Breast epithelium (tissue), 4 donors: ENCODE measurements at regions of chr11 and their contacts with region 1.

Region 1: DNA sequence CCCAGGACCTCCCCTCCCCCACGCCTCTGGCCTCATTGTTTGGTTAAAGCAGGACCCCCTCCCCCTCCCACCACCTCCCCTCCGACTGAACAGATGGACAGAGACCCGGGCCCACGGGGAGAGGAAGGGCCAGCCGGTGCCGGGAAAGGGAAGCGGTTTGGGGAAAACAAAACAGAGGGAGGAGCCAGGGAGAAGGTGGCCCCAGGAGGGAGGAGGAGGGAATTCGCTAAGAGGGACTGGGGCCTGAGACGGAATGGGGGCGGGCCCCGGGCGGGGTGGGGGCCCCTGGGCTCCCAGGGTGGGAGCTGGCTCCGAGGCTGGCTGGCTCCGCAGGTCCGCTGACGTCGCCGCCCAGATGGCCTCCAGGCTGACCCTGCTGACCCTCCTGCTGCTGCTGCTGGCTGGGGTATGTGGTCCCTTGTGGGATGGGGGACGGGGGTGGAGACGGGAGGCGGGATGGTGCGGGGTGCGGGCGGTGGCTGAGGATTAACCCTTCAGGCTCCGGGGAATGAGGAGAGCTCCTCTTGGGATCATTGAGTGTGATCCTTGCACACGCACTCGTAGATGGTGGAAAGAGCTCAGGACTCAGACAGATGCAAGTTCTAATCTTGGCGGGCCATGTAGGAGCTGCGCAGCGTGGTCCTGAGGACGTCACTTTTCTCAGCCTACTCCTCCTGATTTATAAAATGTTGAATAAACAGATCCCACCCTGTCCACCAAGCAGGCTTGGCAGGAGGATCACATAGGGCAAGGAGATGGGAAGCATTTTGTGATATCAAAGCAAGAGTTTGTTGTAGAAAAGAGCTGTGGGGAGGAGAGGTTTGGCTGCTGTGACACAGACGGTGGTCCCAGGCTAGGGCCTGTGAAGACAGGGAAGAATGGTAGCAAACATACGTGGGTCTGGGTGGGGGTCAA is 688 bp downstream of the SERPING1 start:
- DNase-seq: peak; percentile 72 to 78
- H3K4me3 ChIP-seq: peak overlapping the region; percentile 68 to 78 (median 70)
- H3K27ac ChIP-seq: peak overlapping the region; percentile 95 to 100
- H3K4me1 ChIP-seq: no peaks in the 10 kb centered on the region
- H3K27me3 ChIP-seq: no peaks in the 10 kb centered on the region
- CTCF ChIP-seq: no peak
- POLR2A ChIP-seq: no peak

Region 2: GRCh38 chr11:57515332-57516060 is 82.7 kb before region 1 on chr11 and contains the start of gene SLC43A1:
- intact Hi-C with region 1: no loop called
- DNase-seq: no peak
- H3K4me3 ChIP-seq: peak within 1 kb of the TSS; percentile 86 to 92 (median 90)
- H3K27ac ChIP-seq: peak within 1 kb of the TSS; percentile 33 to 66
- H3K4me1 ChIP-seq: peaks cover 3 to 8% of the 10 kb centered on the region in 2 donors
- H3K27me3 ChIP-seq: no peaks in the 10 kb centered on the region
- CTCF ChIP-seq: no peak
- POLR2A ChIP-seq: no peak
- total RNA-seq, gene SLC43A1: 12.0 to 23.4 (median 13.4) TPM

Region 3: GRCh38 chr11:57536947-57537619 is 61.1 kb before region 1 on chr11 and contains the start of gene SMTNL1:
- intact Hi-C with region 1: loop called (anchors 2 kb)
- DNase-seq: no peak
- H3K4me3 ChIP-seq: no peak within 1 kb of the TSS
- H3K27ac ChIP-seq: no peak within 1 kb of the TSS
- H3K4me1 ChIP-seq: no peaks in the 10 kb centered on the region
- H3K27me3 ChIP-seq: no peaks in the 10 kb centered on the region
- CTCF ChIP-seq: no peak
- POLR2A ChIP-seq: no peak
- total RNA-seq, gene SMTNL1: not detected

Region 4: DNA sequence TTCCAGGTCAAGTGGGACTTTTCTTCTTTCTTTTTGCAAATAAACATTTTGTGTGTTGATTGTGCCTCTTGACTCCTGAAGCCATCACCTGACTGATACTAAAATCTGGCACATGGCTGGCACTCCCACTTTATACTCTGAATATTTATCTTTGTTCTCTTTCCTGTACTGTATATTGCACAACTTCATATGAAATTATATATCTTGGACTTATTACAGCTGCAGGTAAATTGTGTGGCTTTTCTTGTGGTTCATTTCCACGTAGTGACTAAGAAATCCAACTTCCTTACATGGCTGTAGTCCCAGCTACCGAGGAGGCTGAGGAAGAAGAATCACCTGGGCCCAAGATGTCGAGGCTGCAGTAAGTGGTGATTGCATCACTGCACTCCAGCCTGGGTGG is 867.5 kb after region 1 on chr11:
- intact Hi-C with region 1: loop called (anchors 5 kb)
- DNase-seq: no peak
- H3K4me3 ChIP-seq: no peak overlapping the region
- H3K27ac ChIP-seq: no peak overlapping the region
- H3K4me1 ChIP-seq: no peaks in the 10 kb centered on the region
- H3K27me3 ChIP-seq: no peaks in the 10 kb centered on the region
- CTCF ChIP-seq: no peak
- POLR2A ChIP-seq: no peak